Left cardiac atrium (tissue), 4 donors: ENCODE measurements at regions of chrX and their contacts with region 1.

Region 1: DNA sequence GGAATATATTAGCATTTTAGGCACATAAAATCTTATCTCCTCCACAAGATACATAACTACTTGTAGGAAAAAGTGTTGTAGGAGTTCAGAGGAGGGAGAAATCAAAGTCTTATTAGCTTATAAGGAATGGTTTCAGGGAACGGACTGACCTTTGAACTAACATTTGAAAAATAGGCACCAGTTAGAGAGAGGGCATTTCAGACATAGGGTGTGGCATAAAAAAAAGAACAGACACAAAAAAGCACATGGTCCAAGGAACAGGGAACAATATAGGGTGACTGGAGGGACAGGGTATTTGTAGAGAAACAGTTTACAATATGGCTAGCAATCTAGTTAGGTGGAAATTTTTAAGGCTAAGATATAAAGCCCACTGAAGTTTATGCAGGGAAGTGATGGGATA is 6.4 kb downstream of the ABCB7 start:
- DNase-seq: no peak
- ATAC-seq: no peak

Region 2: GRCh38 chrX:74835572-74835971 is 314.1 kb before region 1 on chrX:
- intact Hi-C with region 1: no loop called
- DNase-seq: no peak
- ATAC-seq: no peak

Region 3: GRCh38 chrX:75086731-75087195 is 62.9 kb before region 1 on chrX:
- intact Hi-C with region 1: loop called in 1 of 2 experiments (anchors 5 kb)
- DNase-seq: no peak
- ATAC-seq: peak; percentile 30 to 60

Region 4: DNA sequence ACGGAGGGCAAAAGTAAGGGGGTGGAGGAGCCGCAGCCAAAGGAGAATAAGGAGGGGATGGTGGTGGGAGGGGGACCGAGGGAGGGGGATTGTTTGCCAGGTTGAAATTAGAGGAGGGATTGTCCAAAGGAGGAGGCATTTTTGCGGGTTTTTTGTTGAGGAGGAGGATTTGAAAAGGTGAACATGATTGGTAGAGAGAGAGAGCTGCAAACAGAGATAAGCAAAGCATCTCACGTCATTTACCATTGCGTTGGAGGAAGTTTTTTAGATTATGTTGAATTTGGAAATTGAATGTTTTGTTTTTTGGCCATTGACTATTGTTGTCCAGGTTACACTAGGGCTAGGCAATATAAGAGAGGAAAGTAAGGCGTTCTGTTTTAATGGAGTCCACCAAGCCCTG is 60.9 kb after region 1 on chrX:
- intact Hi-C with region 1: no loop called
- DNase-seq: no peak
- ATAC-seq: peak in 1 of 2 donors; percentile 45